ENCODE measurements at regions of chr19 and their contacts with region 1.

Region 1: DNA sequence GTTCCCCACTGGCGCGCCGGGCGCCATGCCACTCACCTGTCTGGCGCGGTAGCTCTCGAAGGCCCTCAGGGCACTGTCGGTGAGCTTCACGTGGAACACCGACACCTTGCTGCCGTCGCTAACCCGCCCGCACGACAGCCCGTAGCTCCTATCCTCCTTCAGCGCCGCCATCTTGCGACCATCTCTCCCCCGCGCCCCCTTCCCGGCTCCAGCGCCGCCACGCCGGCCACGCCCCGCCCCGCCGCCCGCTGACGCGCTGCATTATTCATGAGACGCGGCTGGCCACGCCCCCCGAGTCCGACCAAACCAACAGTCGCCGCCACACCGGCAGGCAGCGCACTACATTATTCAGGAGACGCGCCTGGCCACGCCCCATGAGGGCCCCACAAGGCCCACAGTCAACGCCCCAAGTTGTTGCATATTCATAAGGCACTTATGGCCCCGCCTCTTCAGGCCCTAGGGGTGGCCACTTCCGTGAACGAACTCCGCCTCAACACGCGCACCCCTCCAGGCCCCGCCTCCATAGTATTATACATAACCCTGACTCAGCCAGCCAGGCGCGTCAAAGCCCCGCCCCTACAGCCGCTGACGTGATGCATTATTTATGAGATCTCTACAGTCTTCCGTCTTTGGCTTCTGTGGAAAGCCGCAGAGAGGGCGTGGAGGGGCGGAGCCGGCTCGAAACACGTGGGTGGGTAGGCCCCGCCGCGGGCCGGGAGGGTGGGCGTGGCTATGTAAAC is at the start of gene ELL:
- DNase-seq: peak; percentile 100
- ATAC-seq: peak; percentile 89
- H3K4me3 Mint-ChIP-seq: peak within 1 kb of the TSS; percentile 98
- H3K27ac Mint-ChIP-seq: peak within 1 kb of the TSS; percentile 96
- H3K4me1 Mint-ChIP-seq: peaks cover 24% of the 10 kb centered on the region
- H3K27me3 Mint-ChIP-seq: no peaks in the 10 kb centered on the region
- CTCF ChIP-seq: no peak
- total RNA-seq, gene ELL: 29.0 and 32.6 TPM in 2 replicates

Region 2: GRCh38 chr19:18173572-18174288 is 348.3 kb before region 1 on chr19 and contains the start of gene IFI30:
- CTCF ChIA-PET with region 1: no interaction called
- POLR2A ChIA-PET with region 1: no interaction called
- intact Hi-C with region 1: loop called (anchors 5 kb)
- DNase-seq: peak; percentile 85
- ATAC-seq: peak; percentile 62
- H3K4me3 Mint-ChIP-seq: peak within 1 kb of the TSS; percentile 94
- H3K27ac Mint-ChIP-seq: peak within 1 kb of the TSS; percentile 92
- H3K4me1 Mint-ChIP-seq: peaks cover 90% of the 10 kb centered on the region
- H3K27me3 Mint-ChIP-seq: no peaks in the 10 kb centered on the region
- CTCF ChIP-seq: no peak
- total RNA-seq, gene IFI30: 251 and 255 TPM in 2 replicates

Region 3: GRCh38 chr19:18450931-18451845 is 70.9 kb before region 1 on chr19:
- CTCF ChIA-PET with region 1: no interaction called
- POLR2A ChIA-PET with region 1: no interaction called
- intact Hi-C with region 1: loop called (anchors 1 kb)
- DNase-seq: peak; percentile 90
- ATAC-seq: peak; percentile 97
- H3K4me3 Mint-ChIP-seq: no peak overlapping the region
- H3K27ac Mint-ChIP-seq: no peak overlapping the region
- H3K4me1 Mint-ChIP-seq: peaks cover 5% of the 10 kb centered on the region
- H3K27me3 Mint-ChIP-seq: no peaks in the 10 kb centered on the region
- CTCF ChIP-seq: peak; percentile 45

Region 4: GRCh38 chr19:18588611-18589379 is 66.7 kb after region 1 on chr19 and contains the start of gene REX1BD:
- CTCF ChIA-PET with region 1: interaction called, 13 read pairs
- POLR2A ChIA-PET with region 1: interaction called, 33 read pairs
- intact Hi-C with region 1: loop called (anchors 1 kb)
- DNase-seq: peak; percentile 79
- ATAC-seq: peak; percentile 79
- H3K4me3 Mint-ChIP-seq: peak within 1 kb of the TSS; percentile 87
- H3K27ac Mint-ChIP-seq: peak within 1 kb of the TSS; percentile 83
- H3K4me1 Mint-ChIP-seq: peaks cover 41% of the 10 kb centered on the region
- H3K27me3 Mint-ChIP-seq: peaks cover 2% of the 10 kb centered on the region
- CTCF ChIP-seq: peak; percentile 61
- total RNA-seq, gene REX1BD: 83.7 and 85.9 TPM in 2 replicates

Region 5: DNA sequence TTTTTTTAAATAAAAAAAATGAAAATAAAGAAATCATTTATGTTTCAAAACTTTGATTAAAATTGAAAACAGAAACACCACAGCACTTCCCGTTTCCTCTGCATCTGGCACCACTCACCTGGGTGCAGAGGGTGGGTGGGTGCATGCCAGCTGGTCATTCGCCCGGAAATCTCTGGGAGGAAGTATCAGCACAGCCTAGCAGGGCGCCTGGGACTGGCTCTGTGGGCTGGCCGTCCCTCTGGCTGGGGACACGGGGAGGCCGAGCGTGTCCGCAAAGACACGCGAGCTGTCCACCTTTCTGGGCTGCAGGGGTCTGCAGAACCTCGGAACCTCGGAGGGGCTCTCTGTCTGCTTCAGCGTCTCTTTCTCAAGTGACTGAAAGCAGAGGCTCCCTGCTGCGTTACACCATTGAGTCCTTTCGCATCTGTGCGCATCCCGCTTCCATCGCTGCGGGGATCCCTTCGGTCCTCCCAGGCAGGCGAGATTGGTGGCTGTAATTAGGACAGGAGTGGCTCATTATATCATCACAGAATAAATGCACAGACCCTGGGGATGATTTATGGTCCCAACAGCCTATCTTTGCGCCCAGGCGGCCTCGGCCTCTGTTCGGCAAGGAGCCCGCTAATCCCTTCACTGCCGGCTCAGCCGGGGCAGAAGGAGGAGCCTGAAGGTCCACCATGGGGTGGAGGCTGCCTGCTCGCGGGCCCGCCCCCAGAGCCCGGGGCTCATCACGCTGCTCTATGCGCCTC is 178.6 kb after region 1 on chr19:
- CTCF ChIA-PET with region 1: no interaction called
- POLR2A ChIA-PET with region 1: interaction called, 3 read pairs
- intact Hi-C with region 1: loop called (anchors 5 kb)
- DNase-seq: peak; percentile 63
- ATAC-seq: peak; percentile 87
- H3K4me3 Mint-ChIP-seq: peak overlapping the region; percentile 85
- H3K27ac Mint-ChIP-seq: peak overlapping the region; percentile 95
- H3K4me1 Mint-ChIP-seq: peaks cover 46% of the 10 kb centered on the region
- H3K27me3 Mint-ChIP-seq: no peaks in the 10 kb centered on the region
- CTCF ChIP-seq: no peak

Region 6: DNA sequence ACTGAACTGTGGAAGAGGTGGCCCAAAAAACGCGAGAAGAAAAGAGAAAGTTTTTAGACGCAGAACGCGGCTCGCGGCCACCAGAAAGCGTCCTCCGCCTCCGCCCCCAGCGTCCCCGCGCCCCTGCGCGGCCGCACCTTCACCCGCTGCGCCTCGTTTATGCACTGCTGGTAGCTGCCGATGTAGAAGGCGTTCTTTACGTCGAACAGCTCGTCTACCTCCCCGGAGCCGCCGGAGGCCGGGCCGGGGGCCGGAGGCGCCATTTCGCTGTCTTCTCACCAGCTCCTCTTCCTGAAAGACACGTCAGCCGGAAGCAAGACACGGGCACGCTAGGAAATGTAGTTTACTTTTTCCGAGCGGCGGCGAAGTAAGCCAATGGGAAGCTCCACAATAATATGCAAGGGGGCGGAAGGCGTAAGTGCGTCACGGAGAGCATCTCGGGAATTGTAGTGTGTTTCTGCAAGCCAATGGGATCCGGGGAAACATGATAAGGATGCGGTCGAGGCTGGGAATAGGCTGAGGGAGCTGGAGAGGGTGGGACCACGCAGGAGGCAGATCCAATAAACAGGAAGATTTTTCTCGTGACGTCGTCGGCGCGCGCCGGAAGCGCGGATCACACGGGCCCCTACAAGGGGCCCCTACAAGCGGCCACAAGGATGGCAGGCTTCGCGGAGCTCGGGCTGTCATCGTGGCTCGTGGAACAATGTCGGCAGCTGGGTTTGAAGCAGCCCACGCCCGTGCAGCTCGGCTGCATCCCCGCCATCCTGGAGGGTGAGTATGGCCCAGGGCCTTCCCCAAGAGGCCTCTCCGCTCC is 397.2 kb after region 1 on chr19 and contains the starts of genes COPE and DDX49:
- CTCF ChIA-PET with region 1: no interaction called
- POLR2A ChIA-PET with region 1: interaction called, 12 read pairs
- intact Hi-C with region 1: loop called (anchors 1 kb)
- DNase-seq: peak; percentile 94
- ATAC-seq: peak; percentile 96
- H3K4me3 Mint-ChIP-seq: peak within 1 kb of the TSS; percentile 91
- H3K27ac Mint-ChIP-seq: peak within 1 kb of the TSS; percentile 60
- H3K4me1 Mint-ChIP-seq: peaks cover 46% of the 10 kb centered on the region
- H3K27me3 Mint-ChIP-seq: no peaks in the 10 kb centered on the region
- CTCF ChIP-seq: no peak
- total RNA-seq, gene COPE: 182 and 253 TPM in 2 replicates
- total RNA-seq, gene DDX49: 49.0 and 53.6 TPM in 2 replicates